ENCODE measurements at regions of chr6 and their contacts with region 1.

Region 1: GRCh38 chr6:16319813-16320532 is 81.6 kb downstream of the GMPR start:
- DNase-seq: peak; percentile 81
- H3K4me3 Mint-ChIP-seq: peak overlapping the region; percentile 51
- H3K27ac Mint-ChIP-seq: no peak overlapping the region
- H3K4me1 Mint-ChIP-seq: peaks cover 23% of the 10 kb centered on the region
- H3K27me3 Mint-ChIP-seq: no peaks in the 10 kb centered on the region
- CTCF ChIP-seq: no peak

Region 2: GRCh38 chr6:15881150-15881549 is 438.8 kb before region 1 on chr6:
- CTCF ChIA-PET with region 1: no interaction called
- POLR2A ChIA-PET with region 1: no interaction called
- intact Hi-C with region 1: no loop called
- DNase-seq: no peak
- H3K4me3 Mint-ChIP-seq: no peak overlapping the region
- H3K27ac Mint-ChIP-seq: no peak overlapping the region
- H3K4me1 Mint-ChIP-seq: peaks cover 22% of the 10 kb centered on the region
- H3K27me3 Mint-ChIP-seq: no peaks in the 10 kb centered on the region
- CTCF ChIP-seq: no peak

Region 3: DNA sequence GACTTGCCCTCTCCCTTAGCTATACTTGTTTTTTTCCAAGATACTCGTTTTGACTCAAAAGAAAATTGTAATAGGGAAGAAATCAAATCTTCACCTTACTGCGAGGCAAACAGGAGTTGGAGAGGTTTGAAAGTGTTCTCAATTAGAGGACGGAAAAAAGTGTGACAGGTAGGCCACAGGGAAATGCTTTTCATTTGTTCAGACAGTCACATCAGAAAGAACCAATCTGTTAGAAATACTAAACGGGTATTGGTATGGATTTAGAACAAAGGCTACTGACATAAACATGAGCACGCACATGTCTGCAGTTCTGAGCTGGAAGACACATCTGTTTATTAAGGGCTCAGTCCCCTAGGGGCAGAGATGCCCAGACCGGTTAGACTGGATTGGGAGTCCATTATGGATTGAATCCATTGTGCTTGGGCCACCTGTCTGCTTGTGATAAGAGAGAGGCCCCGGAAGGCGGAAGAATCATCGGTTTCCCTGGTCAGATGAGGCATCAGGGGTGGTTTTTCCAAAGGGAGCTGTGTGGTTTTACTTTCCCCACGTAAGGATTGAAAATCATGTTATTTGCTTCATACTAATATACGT is 412.0 kb before region 1 on chr6:
- CTCF ChIA-PET with region 1: no interaction called
- POLR2A ChIA-PET with region 1: no interaction called
- intact Hi-C with region 1: no loop called
- DNase-seq: no peak
- H3K4me3 Mint-ChIP-seq: no peak overlapping the region
- H3K27ac Mint-ChIP-seq: no peak overlapping the region
- H3K4me1 Mint-ChIP-seq: no peaks in the 10 kb centered on the region
- H3K27me3 Mint-ChIP-seq: no peaks in the 10 kb centered on the region
- CTCF ChIP-seq: no peak

Region 4: DNA sequence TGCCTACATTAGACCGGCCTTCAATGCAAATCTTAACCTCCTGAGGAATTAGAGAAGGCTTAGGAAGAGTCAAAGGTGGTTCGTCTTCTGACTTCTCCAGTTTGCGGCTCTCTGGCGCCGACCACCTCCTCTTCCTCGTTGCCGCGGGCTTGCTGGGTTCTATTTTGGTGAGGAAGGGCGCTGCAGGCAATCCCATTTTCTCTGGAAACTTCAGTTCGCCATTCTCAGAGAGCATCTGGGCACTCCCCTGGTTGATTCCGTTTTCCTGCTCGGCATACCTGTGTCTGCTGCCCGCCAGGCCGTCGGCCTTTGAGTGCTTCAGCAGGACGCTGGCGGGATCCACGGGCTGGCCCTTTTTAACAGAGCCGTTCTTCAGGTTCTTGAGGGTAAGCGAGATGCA is 13.6 kb before region 1 on chr6:
- CTCF ChIA-PET with region 1: interaction called, 17 read pairs
- POLR2A ChIA-PET with region 1: no interaction called
- intact Hi-C with region 1: no loop called
- DNase-seq: no peak
- H3K4me3 Mint-ChIP-seq: no peak overlapping the region
- H3K27ac Mint-ChIP-seq: no peak overlapping the region
- H3K4me1 Mint-ChIP-seq: no peaks in the 10 kb centered on the region
- H3K27me3 Mint-ChIP-seq: no peaks in the 10 kb centered on the region
- CTCF ChIP-seq: no peak

Measured in MCF 10A (cell line).